Natural killer cell (primary cell): ENCODE measurements at regions of chr1 and their contacts with region 1.

Region 1: GRCh38 chr1:212566522-212567479 is 41.8 kb upstream of the ATF3 start:
- DNase-seq: peak; percentile 52 to 72
- ATAC-seq: peak; percentile 95 to 98 (median 96)
- H3K4me3 ChIP-seq: peak overlapping the region; percentile 57
- H3K4me3 Mint-ChIP-seq: peak overlapping the region; percentile 95
- H3K27ac ChIP-seq: peak overlapping the region; percentile 41
- H3K27ac Mint-ChIP-seq: peak overlapping the region; percentile 87 to 91
- H3K4me1 ChIP-seq: peaks cover 9% of the 10 kb centered on the region
- H3K4me1 Mint-ChIP-seq: peaks cover 19% of the 10 kb centered on the region in 2 donors
- H3K27me3 ChIP-seq: no peaks in the 10 kb centered on the region
- H3K27me3 Mint-ChIP-seq: peaks cover 0 to 5% of the 10 kb centered on the region in 2 donors
- CTCF ChIP-seq: no peak

Region 2: GRCh38 chr1:212477014-212477679 is 89.7 kb before region 1 on chr1:
- intact Hi-C with region 1: loop called (anchors 2 kb)
- DNase-seq: peak; percentile 66 to 89
- ATAC-seq: peak; percentile 79 to 87 (median 81)
- H3K4me3 ChIP-seq: no peak overlapping the region
- H3K4me3 Mint-ChIP-seq: no peak overlapping the region
- H3K27ac ChIP-seq: no peak overlapping the region
- H3K27ac Mint-ChIP-seq: peak overlapping the region in 1 of 2 donors; percentile 73
- H3K4me1 ChIP-seq: peaks cover 36% of the 10 kb centered on the region
- H3K4me1 Mint-ChIP-seq: peaks cover 33 to 46% of the 10 kb centered on the region in 2 donors
- H3K27me3 ChIP-seq: no peaks in the 10 kb centered on the region
- H3K27me3 Mint-ChIP-seq: peaks cover 9 to 15% of the 10 kb centered on the region in 2 donors
- CTCF ChIP-seq: peak; percentile 86

Region 3: DNA sequence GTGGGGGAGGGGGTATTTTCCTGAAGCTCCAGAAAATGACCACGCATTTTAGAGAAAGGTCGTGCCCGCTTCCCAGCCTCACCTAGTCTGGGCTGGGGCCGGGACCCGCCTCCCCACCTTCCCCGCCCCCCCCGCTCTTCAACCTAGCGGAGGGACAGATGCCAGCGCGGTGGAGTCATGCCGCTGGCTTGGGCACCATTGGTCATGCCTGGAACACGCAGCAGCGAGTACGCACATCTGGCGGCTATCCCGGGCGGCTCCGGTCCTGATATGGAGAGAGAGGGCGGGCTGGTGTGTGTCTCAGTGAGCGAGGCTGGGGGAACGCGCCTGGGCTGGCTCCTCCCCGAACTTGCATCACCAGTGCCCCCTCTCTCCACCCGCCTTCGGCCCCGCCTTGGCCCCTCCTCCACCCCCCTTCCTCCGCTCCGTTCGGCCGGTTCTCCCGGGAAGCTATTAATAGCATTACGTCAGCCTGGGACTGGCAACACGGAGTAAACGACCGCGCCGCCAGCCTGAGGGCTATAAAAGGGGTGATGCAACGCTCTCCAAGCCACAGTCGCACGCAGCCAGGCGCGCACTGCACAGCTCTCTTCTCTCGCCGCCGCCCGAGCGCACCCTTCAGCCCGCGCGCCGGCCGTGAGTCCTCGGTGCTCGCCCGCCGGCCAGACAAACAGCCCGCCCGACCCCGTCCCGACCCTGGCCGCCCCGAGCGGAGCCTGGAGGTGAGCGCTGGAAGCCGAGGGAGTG is 41.6 kb after region 1 on chr1 and contains the start of gene ATF3:
- intact Hi-C with region 1: loop called (anchors 2 kb)
- DNase-seq: peak; percentile 85 to 87
- ATAC-seq: peak; percentile 74 to 85 (median 75)
- H3K4me3 ChIP-seq: peak within 1 kb of the TSS; percentile 87
- H3K4me3 Mint-ChIP-seq: peak within 1 kb of the TSS; percentile 93
- H3K27ac ChIP-seq: peak within 1 kb of the TSS; percentile 76
- H3K27ac Mint-ChIP-seq: peak within 1 kb of the TSS; percentile 84 to 96
- H3K4me1 ChIP-seq: peaks cover 28% of the 10 kb centered on the region
- H3K4me1 Mint-ChIP-seq: peaks cover 21 to 39% of the 10 kb centered on the region in 2 donors
- H3K27me3 ChIP-seq: peaks cover 35% of the 10 kb centered on the region
- H3K27me3 Mint-ChIP-seq: peaks cover 51 to 58% of the 10 kb centered on the region in 2 donors
- CTCF ChIP-seq: no peak
- total RNA-seq, gene ATF3: 62.2 to 135 (median 78.5) TPM

Region 4: DNA sequence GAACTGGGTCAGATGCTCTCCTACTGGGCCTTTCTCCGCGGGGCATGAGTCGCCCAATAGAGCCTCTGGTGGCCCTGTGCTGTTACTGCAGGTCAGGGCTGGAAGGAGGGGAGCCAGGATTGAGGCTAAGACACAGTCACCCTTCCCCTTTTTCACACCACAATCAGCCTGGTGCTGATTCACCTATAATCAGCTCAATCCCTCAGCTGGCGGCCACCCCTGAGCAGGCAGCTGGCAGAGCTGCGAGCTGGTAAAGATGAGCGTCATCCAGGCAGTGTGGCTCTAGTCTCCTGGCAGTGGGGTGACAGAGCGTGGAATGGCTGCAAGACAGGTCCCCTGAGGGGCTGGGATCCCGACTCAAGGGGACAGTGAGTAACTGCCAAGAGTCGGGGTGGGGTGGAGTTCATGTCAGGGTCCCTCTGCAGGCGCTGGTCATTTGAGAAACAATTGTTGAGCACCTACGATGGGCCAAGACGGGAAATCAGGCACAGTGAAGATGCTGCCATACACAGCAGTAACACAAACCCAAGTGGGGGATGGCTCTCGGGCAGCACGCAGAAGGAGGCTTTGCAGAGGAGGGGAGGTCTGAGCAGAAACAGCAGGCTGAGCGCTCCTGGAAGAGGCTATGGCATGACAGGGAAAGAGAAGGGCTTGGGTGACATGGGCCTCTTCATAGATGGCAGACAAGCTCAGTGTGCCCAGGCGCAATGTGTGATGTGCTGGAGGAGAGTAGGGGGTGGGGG is 63.5 kb after region 1 on chr1:
- intact Hi-C with region 1: loop called (anchors 2 kb)
- DNase-seq: peak; percentile 53 to 78
- ATAC-seq: peak; percentile 93 to 99 (median 97)
- H3K4me3 ChIP-seq: no peak overlapping the region
- H3K4me3 Mint-ChIP-seq: no peak overlapping the region
- H3K27ac ChIP-seq: no peak overlapping the region
- H3K27ac Mint-ChIP-seq: no peak overlapping the region
- H3K4me1 ChIP-seq: peaks cover 9% of the 10 kb centered on the region
- H3K4me1 Mint-ChIP-seq: peaks cover 7 to 8% of the 10 kb centered on the region in 2 donors
- H3K27me3 ChIP-seq: no peaks in the 10 kb centered on the region
- H3K27me3 Mint-ChIP-seq: peaks cover 13 to 17% of the 10 kb centered on the region in 2 donors
- CTCF ChIP-seq: peak; percentile 91